Esophagus squamous epithelium (tissue), 5 donors: ENCODE measurements at regions of chr7 and their contacts with region 1.

Region 1: DNA sequence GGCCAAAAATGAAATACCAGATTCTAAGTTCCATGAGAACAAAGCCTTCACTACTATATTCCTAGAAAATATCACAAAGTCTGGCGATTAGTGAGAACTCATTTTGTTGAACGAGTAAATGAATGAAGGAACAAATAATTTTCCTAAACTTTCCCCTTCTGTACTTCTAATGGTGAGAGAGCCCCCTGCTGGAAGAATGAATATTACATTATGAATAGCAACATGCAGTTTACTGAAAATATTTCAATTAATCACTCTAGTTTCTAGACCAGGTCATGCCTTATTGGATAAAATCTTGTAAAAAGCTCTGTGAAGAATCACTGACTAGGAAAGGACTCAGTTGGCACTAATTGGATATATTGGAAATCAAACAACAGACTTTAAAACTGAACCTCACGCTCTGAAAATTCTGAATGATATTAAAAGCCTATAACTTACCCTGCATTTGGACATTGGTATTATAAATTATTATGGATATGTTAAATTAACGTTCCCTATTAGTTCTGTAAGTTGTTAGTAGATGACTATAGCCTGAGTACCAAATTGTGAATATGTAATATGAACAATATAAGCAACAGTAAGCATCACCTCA is 32.4 kb upstream of the MTPN start:
- DNase-seq: no peak
- H3K4me3 ChIP-seq: no peak overlapping the region
- H3K27ac ChIP-seq: no peak overlapping the region
- H3K4me1 ChIP-seq: peaks cover 0 to 4% (median 0%) of the 10 kb centered on the region in 3 donors
- H3K27me3 ChIP-seq: peaks cover 0 to 3% (median 0%) of the 10 kb centered on the region in 4 donors
- CTCF ChIP-seq: peak; percentile 74 to 84 (median 76)
- POLR2A ChIP-seq: no peak

Region 2: GRCh38 chr7:135801045-135801693 is 208.4 kb before region 1 on chr7:
- intact Hi-C with region 1: loop called (anchors 5 kb)
- DNase-seq: no peak
- H3K4me3 ChIP-seq: peak overlapping the region in 1 of 4 donors; percentile 10
- H3K27ac ChIP-seq: no peak overlapping the region
- H3K4me1 ChIP-seq: peaks cover 0 to 37% (median 0%) of the 10 kb centered on the region in 3 donors
- H3K27me3 ChIP-seq: peaks cover 0 to 5% (median 0%) of the 10 kb centered on the region in 4 donors
- CTCF ChIP-seq: peak; percentile 65 to 86 (median 78)
- POLR2A ChIP-seq: no peak